PC-3 (cell line): ENCODE measurements at regions of chr3 and their contacts with region 1.

Region 1: GRCh38 chr3:27503526-27503925 is 19.3 kb upstream of the SLC4A7 start:
- DNase-seq: peak; percentile 92
- ATAC-seq: peak; percentile 81
- H3K4me3 ChIP-seq: no peak overlapping the region
- H3K27ac ChIP-seq: peak overlapping the region; percentile 57
- H3K4me1 ChIP-seq: peaks cover 36% of the 10 kb centered on the region
- H3K27me3 ChIP-seq: no peaks in the 10 kb centered on the region
- CTCF ChIP-seq: no peak

Region 2: GRCh38 chr3:27271890-27272289 is 231.6 kb before region 1 on chr3:
- CTCF ChIA-PET with region 1: no interaction called
- POLR2A ChIA-PET with region 1: no interaction called
- intact Hi-C with region 1: no loop called
- DNase-seq: no peak
- ATAC-seq: no peak
- H3K4me3 ChIP-seq: no peak overlapping the region
- H3K27ac ChIP-seq: no peak overlapping the region
- H3K4me1 ChIP-seq: no peaks in the 10 kb centered on the region
- H3K27me3 ChIP-seq: no peaks in the 10 kb centered on the region
- CTCF ChIP-seq: no peak

Region 3: GRCh38 chr3:27521179-27521871 is 17.8 kb after region 1 on chr3:
- CTCF ChIA-PET with region 1: no interaction called
- POLR2A ChIA-PET with region 1: no interaction called
- intact Hi-C with region 1: loop called (anchors 1 kb)
- DNase-seq: peak; percentile 90
- ATAC-seq: peak; percentile 70
- H3K4me3 ChIP-seq: no peak overlapping the region
- H3K27ac ChIP-seq: peak overlapping the region; percentile 64
- H3K4me1 ChIP-seq: peaks cover 43% of the 10 kb centered on the region
- H3K27me3 ChIP-seq: no peaks in the 10 kb centered on the region
- CTCF ChIP-seq: no peak

Region 4: GRCh38 chr3:27570421-27571106 is 67.0 kb after region 1 on chr3:
- CTCF ChIA-PET with region 1: no interaction called
- POLR2A ChIA-PET with region 1: interaction called, 14 read pairs
- intact Hi-C with region 1: no loop called
- DNase-seq: no peak
- ATAC-seq: no peak
- H3K4me3 ChIP-seq: no peak overlapping the region
- H3K27ac ChIP-seq: no peak overlapping the region
- H3K4me1 ChIP-seq: peaks cover 13% of the 10 kb centered on the region; the same call in 1 of the 2 replicates
- H3K27me3 ChIP-seq: no peaks in the 10 kb centered on the region
- CTCF ChIP-seq: no peak

Region 5: GRCh38 chr3:27577504-27577903 is 74.0 kb after region 1 on chr3:
- CTCF ChIA-PET with region 1: no interaction called
- POLR2A ChIA-PET with region 1: interaction called, 17 read pairs
- intact Hi-C with region 1: no loop called
- DNase-seq: no peak
- ATAC-seq: no peak
- H3K4me3 ChIP-seq: no peak overlapping the region
- H3K27ac ChIP-seq: no peak overlapping the region
- H3K4me1 ChIP-seq: peaks cover 4% of the 10 kb centered on the region; the same call in 1 of the 2 replicates
- H3K27me3 ChIP-seq: no peaks in the 10 kb centered on the region
- CTCF ChIP-seq: no peak